ENCODE measurements at regions of chr16 and their contacts with region 1.

Region 1: GRCh38 chr16:31073968-31074813 is at the starts of genes ZNF646 and ZNF668:
- DNase-seq: peak; percentile 89 to 97
- H3K4me3 ChIP-seq: peak within 1 kb of the TSS; percentile 89 to 98 (median 90)
- H3K27ac ChIP-seq: peak within 1 kb of the TSS; percentile 82
- H3K4me1 ChIP-seq: peaks cover 0 to 1% (median 0%) of the 10 kb centered on the region in 4 experiments; a peak in 2 of 7 replicates
- H3K27me3 ChIP-seq: no peaks in the 10 kb centered on the region
- CTCF ChIP-seq: no peak
- EP300 ChIP-seq: no peak; a peak in 1 of 3 replicates
- POLR2A ChIP-seq: peak; percentile 72 to 92
- RAD21 ChIP-seq: no peak
- total RNA-seq, gene ZNF646: 25.0 TPM in 2 replicates
- total RNA-seq, gene ZNF668: 13.6 and 14.0 TPM in 2 replicates

Region 2: DNA sequence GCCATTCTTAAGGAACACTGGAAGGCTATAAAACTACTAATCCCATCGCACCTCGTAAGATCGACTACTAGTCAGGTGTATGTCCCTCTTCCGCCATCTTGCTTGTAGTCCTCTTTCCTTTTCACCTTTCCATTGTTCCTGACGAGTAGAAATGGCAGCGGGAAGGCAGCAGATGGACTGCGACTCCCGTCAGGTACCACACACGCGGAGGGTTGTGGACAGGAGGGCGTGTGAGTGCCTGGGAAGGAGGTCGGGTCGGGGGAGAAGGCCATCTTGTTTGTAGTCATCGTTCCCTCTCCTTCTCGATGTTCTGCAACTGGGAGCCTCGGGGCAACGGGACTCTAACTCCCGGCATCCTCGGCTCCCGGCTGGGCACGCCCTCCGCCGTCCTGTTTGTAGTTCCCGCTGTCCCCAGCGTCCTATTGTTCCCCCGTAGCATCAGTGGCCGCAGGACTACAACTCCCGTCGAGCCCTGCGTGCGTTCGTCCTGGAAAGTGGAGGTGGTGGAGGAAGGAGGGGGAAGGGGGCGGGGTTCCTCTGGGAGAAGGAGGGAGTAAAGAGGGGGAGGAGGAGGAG is 151.1 kb before region 1 on chr16:
- CTCF ChIA-PET with region 1: no interaction called
- POLR2A ChIA-PET with region 1: no interaction called
- DNase-seq: peak; percentile 92 to 99
- H3K4me3 ChIP-seq: peak overlapping the region; percentile 57 to 88 (median 84)
- H3K27ac ChIP-seq: peak overlapping the region; percentile 98
- H3K4me1 ChIP-seq: peaks cover 0 to 9% (median 2%) of the 10 kb centered on the region in 4 experiments; a peak in 4 of 7 replicates
- H3K27me3 ChIP-seq: no peaks in the 10 kb centered on the region
- CTCF ChIP-seq: no peak
- EP300 ChIP-seq: no peak
- POLR2A ChIP-seq: peak; percentile 43 to 78
- RAD21 ChIP-seq: no peak

Region 3: GRCh38 chr16:30972872-30973271 is 101.3 kb before region 1 on chr16:
- CTCF ChIA-PET with region 1: no interaction called
- POLR2A ChIA-PET with region 1: no interaction called
- DNase-seq: no peak
- H3K4me3 ChIP-seq: no peak overlapping the region
- H3K27ac ChIP-seq: no peak overlapping the region
- H3K4me1 ChIP-seq: no peaks in the 10 kb centered on the region
- H3K27me3 ChIP-seq: no peaks in the 10 kb centered on the region
- CTCF ChIP-seq: peak in 2 of 3 experiments; percentile 45 to 61; a peak in 3 of 4 replicates
- EP300 ChIP-seq: no peak
- POLR2A ChIP-seq: no peak
- RAD21 ChIP-seq: no peak

Region 4: GRCh38 chr16:31052124-31052523 is 22.1 kb before region 1 on chr16:
- CTCF ChIA-PET with region 1: interaction called, 4 read pairs
- POLR2A ChIA-PET with region 1: interaction called, 10 read pairs
- DNase-seq: no peak
- H3K4me3 ChIP-seq: no peak overlapping the region
- H3K27ac ChIP-seq: no peak overlapping the region
- H3K4me1 ChIP-seq: peaks cover 0 to 4% (median 0%) of the 10 kb centered on the region in 4 experiments; a peak in 2 of 7 replicates
- H3K27me3 ChIP-seq: no peaks in the 10 kb centered on the region
- CTCF ChIP-seq: no peak
- EP300 ChIP-seq: no peak
- POLR2A ChIP-seq: no peak
- RAD21 ChIP-seq: no peak

Region 5: DNA sequence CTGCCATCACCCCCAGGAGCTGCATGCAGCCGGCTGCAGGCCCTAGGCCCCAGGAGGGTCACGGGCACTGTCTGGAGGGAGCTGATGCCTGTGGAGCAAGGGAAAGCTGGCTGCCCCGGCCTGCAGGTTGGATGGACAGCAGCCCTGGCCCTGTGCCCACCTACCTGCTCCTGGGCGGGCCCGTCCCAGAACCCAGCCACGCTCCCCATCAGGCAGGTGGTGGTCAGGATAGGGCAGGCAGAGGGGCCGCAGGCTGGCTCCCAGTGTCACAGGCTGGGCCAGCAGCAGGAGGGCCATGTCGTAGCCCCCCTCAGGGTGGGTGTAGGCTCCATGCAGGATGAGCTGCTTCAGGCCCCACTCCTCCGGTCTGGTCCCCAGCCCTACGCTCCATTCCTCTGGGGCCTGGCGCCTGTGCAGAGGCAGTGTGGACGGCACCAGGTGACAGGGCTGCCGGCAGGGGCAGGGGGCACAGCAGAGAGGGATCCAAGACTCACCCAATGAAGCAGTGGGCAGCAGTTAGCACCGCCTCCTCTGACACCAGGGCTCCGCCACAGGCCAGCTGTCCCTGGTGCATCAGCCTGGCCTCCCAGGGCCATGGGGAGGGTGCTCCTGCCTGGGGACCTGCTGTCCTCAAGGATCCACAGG is 10.5 kb after region 1 on chr16:
- CTCF ChIA-PET with region 1: interaction called, 14 read pairs
- POLR2A ChIA-PET with region 1: interaction called, 34 read pairs
- DNase-seq: no peak
- H3K4me3 ChIP-seq: no peak overlapping the region
- H3K27ac ChIP-seq: no peak overlapping the region
- H3K4me1 ChIP-seq: no peaks in the 10 kb centered on the region
- H3K27me3 ChIP-seq: no peaks in the 10 kb centered on the region
- CTCF ChIP-seq: no peak
- EP300 ChIP-seq: no peak
- POLR2A ChIP-seq: no peak
- RAD21 ChIP-seq: no peak

Region 6: DNA sequence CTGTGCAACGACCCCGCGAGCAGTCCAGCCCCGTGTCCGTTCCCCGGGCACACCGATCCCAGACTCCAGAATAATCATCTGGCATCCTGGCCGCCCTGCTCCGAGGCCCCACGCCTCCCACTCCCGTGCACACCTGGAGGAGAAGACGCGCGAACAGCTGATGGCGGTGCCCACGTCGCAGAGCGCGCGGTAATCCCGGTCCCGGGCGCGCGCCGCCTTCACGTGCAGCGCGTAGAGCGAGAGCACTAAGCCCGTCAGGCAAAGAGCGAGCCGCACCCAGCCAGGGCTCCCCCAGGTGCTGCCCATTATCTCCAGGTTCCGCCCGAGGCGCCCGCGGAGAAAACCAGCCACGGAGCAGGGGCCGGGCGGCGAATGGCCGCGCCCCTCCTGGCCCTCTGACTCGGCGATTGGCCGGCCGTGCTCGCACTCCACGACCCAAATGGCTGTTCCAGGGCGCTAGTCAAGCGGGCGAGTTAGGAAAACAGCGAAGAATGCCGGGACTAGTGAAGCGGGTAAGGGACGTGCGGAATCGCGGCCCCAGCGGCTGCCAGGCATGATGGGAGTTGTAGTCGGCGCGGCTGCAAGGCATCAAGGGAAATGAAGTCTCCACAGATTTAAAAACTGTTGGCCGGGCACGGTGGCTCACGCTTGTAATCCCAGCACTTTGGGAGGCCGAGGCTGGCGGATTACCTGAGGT is 20.4 kb after region 1 on chr16 and contains the start of gene VKORC1:
- CTCF ChIA-PET with region 1: interaction called, 14 read pairs
- POLR2A ChIA-PET with region 1: interaction called, 26 read pairs
- DNase-seq: peak; percentile 90 to 92
- H3K4me3 ChIP-seq: peak within 1 kb of the TSS; percentile 87 to 96 (median 92)
- H3K27ac ChIP-seq: peak within 1 kb of the TSS; percentile 16; the same call in 1 of the 2 replicates
- H3K4me1 ChIP-seq: peaks cover 0 to 9% (median 3%) of the 10 kb centered on the region in 4 experiments; a peak in 4 of 7 replicates
- H3K27me3 ChIP-seq: no peaks in the 10 kb centered on the region
- CTCF ChIP-seq: no peak
- EP300 ChIP-seq: no peak
- POLR2A ChIP-seq: peak in 1 of 2 experiments; percentile 36; a peak in 1 of 3 replicates
- RAD21 ChIP-seq: no peak
- total RNA-seq, gene VKORC1: 83.3 and 84.1 TPM in 2 replicates

Region 7: DNA sequence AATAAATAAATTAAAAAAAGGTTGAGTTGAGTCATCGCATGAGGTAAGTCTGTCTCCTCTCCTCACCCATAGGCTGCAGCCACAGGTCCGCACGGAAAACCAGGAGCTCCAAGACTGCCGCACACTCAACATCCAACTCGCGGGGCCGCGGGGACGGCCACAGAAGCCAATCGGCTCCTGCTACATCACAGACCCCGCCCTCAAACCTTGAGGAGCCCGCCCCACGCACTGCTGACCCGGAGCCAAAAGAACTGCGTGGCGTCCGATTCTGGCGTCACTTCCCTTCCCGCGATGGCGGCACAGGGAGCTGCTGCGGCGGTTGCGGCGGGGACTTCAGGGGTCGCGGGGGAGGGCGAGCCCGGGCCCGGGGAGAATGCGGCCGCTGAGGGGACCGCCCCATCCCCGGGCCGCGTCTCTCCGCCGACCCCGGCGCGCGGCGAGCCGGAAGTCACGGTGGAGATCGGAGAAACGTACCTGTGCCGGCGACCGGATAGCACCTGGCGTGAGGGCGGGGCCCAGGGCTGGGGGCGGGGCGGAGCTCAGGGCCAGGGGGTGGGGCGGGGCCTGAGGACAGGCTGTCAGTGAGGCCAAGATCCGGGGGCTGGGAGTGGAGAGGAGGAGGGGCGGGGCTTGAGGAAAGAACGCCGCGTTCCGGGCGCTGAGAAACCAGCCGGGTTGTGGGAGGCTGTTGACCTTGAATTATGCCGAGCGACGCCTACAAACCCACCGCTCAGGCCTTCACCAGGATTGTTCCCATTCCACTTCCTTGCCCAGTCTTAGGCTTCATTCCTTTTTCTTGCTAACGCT is 43.4 kb after region 1 on chr16 and contains the start of gene KAT8:
- CTCF ChIA-PET with region 1: interaction called, 3 read pairs
- POLR2A ChIA-PET with region 1: interaction called, 21 read pairs
- DNase-seq: peak; percentile 90 to 94
- H3K4me3 ChIP-seq: peak within 1 kb of the TSS; percentile 70 to 96 (median 90)
- H3K27ac ChIP-seq: peak within 1 kb of the TSS; percentile 90
- H3K4me1 ChIP-seq: peaks cover 0 to 4% (median 2%) of the 10 kb centered on the region in 4 experiments; a peak in 3 of 7 replicates
- H3K27me3 ChIP-seq: no peaks in the 10 kb centered on the region
- CTCF ChIP-seq: peak in 1 of 3 experiments; percentile 4; a peak in 1 of 4 replicates
- EP300 ChIP-seq: no peak
- POLR2A ChIP-seq: peak; percentile 62 to 95
- RAD21 ChIP-seq: peak in 1 of 2 experiments; percentile 13; a peak in 1 of 4 replicates
- total RNA-seq, gene KAT8: 61.6 and 68.7 TPM in 2 replicates

Region 8: DNA sequence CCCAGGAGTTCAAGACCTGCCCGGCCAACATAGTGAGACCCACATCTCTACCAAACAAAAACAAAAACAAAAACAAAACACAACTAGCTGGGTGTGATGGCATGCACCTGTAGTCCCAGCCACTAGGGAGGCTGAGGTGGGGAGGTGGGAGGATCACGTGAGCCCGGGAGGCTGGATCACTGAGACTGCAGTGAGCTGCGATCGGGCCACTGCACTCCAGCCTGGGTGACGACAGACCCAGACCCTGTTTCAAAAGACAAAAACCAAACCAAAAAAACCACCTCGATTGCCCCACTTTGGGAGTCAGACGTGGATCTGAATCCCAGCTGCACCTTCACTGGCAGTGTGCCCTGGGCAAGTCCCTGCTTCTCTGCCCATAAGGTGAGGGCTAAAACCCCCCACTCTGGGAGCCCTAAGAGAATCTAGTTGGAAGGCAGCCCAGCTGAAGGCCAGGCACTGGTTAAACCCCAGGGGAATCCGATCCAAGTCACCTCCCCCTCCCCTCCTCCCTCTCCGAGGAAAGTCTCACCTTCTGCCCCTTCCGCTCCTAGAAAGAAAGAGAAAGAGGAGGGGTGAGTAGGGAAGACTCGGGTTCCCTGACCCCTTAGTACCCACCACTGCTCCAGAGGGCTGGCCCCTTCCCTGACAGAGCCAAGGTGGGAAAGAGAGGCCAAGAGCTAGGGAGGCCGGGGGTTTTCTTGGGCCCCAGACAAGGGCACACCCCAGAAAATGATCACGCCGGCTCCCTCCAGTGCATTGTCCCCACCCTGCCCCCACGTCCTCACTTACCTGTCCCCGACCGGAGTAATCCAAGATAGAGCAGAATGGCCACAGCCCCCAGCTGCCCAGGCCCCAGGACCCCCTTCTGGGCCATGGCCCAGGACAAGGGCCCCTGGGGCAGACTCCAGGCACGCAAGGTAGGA is 60.7 kb after region 1 on chr16:
- CTCF ChIA-PET with region 1: interaction called, 8 read pairs
- POLR2A ChIA-PET with region 1: interaction called, 15 read pairs
- DNase-seq: peak in 1 of 2 experiments; percentile 66
- H3K4me3 ChIP-seq: peak overlapping the region; percentile 65 to 87 (median 81)
- H3K27ac ChIP-seq: peak overlapping the region; percentile 86; the same call in 1 of the 2 replicates
- H3K4me1 ChIP-seq: peaks cover 5 to 54% (median 44%) of the 10 kb centered on the region in 4 experiments
- H3K27me3 ChIP-seq: no peaks in the 10 kb centered on the region
- CTCF ChIP-seq: no peak
- EP300 ChIP-seq: no peak
- POLR2A ChIP-seq: peak in 1 of 2 experiments; percentile 60; a peak in 2 of 3 replicates
- RAD21 ChIP-seq: no peak

Measured in H1 (cell line).